Upper lobe of right lung (tissue), 1 donor: ENCODE measurements at regions of chr2 and their contacts with region 1.

Region 1: GRCh38 chr2:68362069-68362468 is 3.0 kb upstream of the PLEK start:
- DNase-seq: peak; percentile 88
- ATAC-seq: peak; percentile 94
- H3K4me3 ChIP-seq: peak overlapping the region; percentile 12
- H3K27ac ChIP-seq: no peak overlapping the region
- H3K4me1 ChIP-seq: peaks cover 4% of the 10 kb centered on the region
- H3K27me3 ChIP-seq: no peaks in the 10 kb centered on the region
- CTCF ChIP-seq: peak; percentile 85

Region 2: DNA sequence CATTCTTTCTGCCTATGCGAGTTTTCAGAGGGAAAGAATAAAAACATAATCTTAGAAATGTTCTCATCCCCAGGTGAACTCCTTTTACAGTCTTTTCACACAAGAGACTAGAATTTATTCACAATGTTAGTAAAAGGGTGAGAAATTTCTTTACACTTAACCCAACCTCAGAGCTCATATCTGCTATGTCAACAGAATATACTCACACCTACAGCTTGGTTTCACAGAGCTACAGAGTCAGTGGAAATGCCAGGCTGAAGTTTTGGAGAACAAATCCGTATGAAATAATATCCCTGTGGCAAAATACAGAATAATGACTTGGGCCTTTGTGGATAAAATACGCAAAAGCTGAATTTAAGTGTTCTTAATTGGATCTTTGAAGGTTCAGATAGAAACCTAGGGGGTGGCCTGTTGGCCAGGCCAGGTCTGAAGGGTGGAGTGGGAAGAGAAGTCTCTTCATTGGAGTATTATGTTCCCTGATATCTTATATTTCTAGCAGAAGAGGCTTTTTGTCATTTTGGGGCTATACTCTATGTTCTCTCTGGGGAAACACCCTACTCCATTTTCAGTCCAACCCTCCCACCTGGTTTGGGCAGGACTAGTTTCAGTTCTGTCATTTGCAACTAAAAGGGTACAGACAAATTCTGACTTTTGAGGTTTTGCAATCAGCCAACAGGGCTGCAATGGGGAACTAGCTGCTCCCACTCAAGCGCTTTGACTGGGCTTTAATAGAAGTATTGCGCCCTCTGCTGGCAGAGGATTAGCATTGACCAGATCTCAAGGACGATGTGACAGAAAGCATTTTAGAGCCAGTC is 79.3 kb after region 1 on chr2:
- intact Hi-C with region 1: loop called (anchors 5 kb)
- DNase-seq: peak; percentile 72
- ATAC-seq: peak; percentile 98
- H3K4me3 ChIP-seq: no peak overlapping the region
- H3K27ac ChIP-seq: no peak overlapping the region
- H3K4me1 ChIP-seq: peaks cover 10% of the 10 kb centered on the region
- H3K27me3 ChIP-seq: no peaks in the 10 kb centered on the region
- CTCF ChIP-seq: peak; percentile 98